Colonic mucosa (tissue), 4 donors: ENCODE measurements at regions of chr14 and their contacts with region 1.

Region 1: GRCh38 chr14:62983821-62984220 is 61.4 kb downstream of the KCNH5 start:
- DNase-seq: no peak
- H3K4me3 ChIP-seq: no peak overlapping the region
- H3K27ac ChIP-seq: no peak overlapping the region
- H3K4me1 ChIP-seq: no peaks in the 10 kb centered on the region
- H3K27me3 ChIP-seq: no peaks in the 10 kb centered on the region
- CTCF ChIP-seq: no peak

Region 2: DNA sequence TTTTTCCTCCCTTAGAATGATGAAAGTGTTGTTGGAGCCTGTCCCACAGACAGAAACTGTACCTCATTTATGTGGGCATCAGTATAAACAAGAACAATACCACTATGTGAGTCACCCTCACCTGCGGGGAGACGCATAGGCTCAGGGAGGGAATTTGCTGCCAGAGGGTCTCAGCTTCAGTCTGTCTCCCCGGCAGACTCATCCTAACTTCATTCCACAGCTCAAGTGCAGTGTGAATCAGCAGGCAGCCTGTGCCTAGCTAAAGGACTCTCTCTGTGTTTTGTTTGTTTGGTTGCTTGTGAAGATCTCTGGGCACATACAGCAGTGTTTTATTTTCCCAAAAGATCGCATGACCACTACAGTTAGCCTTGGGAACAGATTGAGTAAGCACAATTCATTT is 1563.5 kb before region 1 on chr14:
- intact Hi-C with region 1: loop called (anchors 10 kb)
- DNase-seq: no peak
- H3K4me3 ChIP-seq: no peak overlapping the region
- H3K27ac ChIP-seq: no peak overlapping the region
- H3K4me1 ChIP-seq: no peaks in the 10 kb centered on the region
- H3K27me3 ChIP-seq: no peaks in the 10 kb centered on the region
- CTCF ChIP-seq: no peak

Region 3: DNA sequence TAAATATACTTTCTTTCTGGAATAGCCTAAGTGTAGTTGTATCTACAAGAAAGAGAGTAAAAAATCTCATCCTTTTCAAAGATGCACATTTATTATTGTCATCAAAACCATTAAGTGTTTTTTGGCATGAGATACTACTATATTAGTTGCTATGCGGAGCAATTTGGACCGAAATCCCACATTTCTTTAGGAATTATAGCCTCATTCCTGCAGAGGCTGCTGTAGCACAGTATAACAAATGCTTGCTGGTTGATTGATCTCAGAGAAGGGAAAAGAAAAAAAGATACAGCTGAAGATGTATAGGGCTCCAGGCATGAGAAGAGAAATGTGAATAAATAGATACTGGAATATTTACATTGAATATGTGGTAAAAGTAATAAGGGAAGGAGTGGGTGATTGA is 256.4 kb after region 1 on chr14:
- intact Hi-C with region 1: no loop called
- DNase-seq: no peak
- H3K4me3 ChIP-seq: no peak overlapping the region
- H3K27ac ChIP-seq: no peak overlapping the region
- H3K4me1 ChIP-seq: no peaks in the 10 kb centered on the region
- H3K27me3 ChIP-seq: no peaks in the 10 kb centered on the region
- CTCF ChIP-seq: no peak